ENCODE measurements at regions of chr22 and their contacts with region 1.

Region 1: DNA sequence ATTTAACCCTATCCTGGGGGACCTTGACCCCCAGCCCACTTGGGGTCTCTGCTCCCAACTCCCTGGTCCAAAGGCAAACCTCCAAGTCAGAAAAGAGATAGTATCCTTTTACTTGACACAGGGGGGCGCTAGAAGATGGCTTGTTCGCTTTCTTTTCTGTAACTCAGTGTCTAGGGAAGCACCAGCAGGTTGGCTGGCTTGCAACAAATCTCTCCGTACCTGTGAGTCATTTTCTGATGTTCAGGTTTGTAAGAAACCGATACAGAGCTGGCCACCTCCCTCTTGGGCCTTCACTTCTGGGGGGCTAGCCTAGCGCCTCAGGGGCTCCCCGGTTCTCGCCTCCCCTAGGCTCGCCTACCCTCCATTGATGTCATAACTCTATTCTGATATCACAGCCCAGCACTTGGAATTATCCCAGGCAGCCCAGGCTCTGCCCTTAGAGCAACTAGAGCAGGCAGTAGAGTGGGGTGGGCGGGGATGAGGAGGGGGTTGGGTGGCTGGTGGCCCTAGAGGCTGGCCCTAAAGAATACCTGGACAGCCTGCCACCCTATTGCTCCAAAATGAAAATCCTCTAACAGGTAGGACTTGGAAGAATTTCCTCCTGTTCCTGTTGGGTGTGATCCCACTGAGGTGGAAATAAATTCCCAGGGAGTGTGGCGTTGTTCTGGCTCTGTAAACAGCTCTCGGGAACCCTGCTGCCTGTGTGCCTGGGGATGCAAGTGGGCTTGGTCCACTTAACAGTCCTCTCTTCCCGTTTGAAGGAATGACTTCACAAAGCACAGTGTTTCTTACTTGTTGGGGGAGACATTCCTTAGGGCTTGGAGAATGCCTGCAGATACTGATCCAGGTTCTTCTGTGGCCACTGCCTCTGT is 69.4 kb downstream of the OSBP2 start:
- DNase-seq: peak; percentile 72
- H3K4me3 ChIP-seq: no peak overlapping the region; a peak in 1 of 4 replicates
- H3K27ac ChIP-seq: no peak overlapping the region
- H3K4me1 ChIP-seq: no peaks in the 10 kb centered on the region
- H3K27me3 ChIP-seq: no peaks in the 10 kb centered on the region
- CTCF ChIP-seq: peak; percentile 84
- EP300 ChIP-seq: no peak
- RAD21 ChIP-seq: peak; percentile 95

Region 2: DNA sequence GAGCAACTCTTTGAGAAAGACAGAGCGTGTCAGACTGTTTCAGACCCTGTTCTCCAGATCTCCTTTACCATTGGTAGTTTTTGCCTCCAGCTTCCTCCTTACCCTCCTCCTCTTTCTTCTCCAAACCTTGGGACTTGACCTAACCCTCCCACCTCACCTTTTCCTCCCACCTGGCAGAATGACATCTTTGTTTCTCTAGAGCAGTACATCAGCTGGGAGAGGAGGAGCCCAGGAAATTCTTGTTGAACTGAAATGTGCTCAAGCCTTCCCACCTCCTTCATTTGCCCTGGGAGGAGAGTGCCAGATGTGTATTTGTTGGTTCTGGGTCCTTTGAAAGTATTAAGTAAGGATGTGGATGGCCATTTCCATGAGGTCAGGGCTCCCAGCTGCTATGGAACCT is 52.0 kb before region 1 on chr22:
- CTCF ChIA-PET with region 1: no interaction called
- POLR2A ChIA-PET with region 1: no interaction called
- DNase-seq: no peak
- H3K4me3 ChIP-seq: no peak overlapping the region
- H3K27ac ChIP-seq: no peak overlapping the region
- H3K4me1 ChIP-seq: peaks cover 0 to 4% of the 10 kb centered on the region in 2 experiments; a peak in 1 of 4 replicates
- H3K27me3 ChIP-seq: no peaks in the 10 kb centered on the region
- CTCF ChIP-seq: no peak
- EP300 ChIP-seq: no peak
- RAD21 ChIP-seq: no peak

Region 3: DNA sequence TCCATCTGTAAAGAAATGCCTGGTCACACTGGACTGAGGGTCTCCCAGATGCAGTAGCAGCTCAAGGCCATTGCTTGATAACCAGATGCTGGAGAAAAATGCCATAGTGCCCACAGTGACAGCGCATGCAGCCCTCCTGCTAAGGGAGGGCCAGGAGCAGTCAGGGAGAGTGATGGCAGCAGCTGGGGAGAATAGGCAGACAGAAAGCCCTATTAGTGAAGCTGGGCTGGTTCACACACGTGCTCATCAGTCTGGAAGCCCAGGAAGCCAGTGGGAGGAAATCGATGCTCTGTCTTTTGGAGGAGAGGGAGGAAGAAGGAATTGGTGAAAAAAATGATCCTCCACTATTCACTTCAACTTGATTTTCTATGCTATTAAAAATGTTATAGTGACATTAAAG is 13.5 kb after region 1 on chr22:
- CTCF ChIA-PET with region 1: interaction called, 16 read pairs
- POLR2A ChIA-PET with region 1: no interaction called
- DNase-seq: peak; percentile 31
- H3K4me3 ChIP-seq: no peak overlapping the region
- H3K27ac ChIP-seq: no peak overlapping the region
- H3K4me1 ChIP-seq: no peaks in the 10 kb centered on the region; a peak in 2 of 4 replicates
- H3K27me3 ChIP-seq: no peaks in the 10 kb centered on the region
- CTCF ChIP-seq: no peak
- EP300 ChIP-seq: no peak
- RAD21 ChIP-seq: no peak

Region 4: GRCh38 chr22:30908051-30908461 is 144.0 kb after region 1 on chr22:
- CTCF ChIA-PET with region 1: interaction called, 10 read pairs
- POLR2A ChIA-PET with region 1: no interaction called
- DNase-seq: no peak
- H3K4me3 ChIP-seq: no peak overlapping the region
- H3K27ac ChIP-seq: no peak overlapping the region
- H3K4me1 ChIP-seq: no peaks in the 10 kb centered on the region
- H3K27me3 ChIP-seq: no peaks in the 10 kb centered on the region
- CTCF ChIP-seq: no peak
- EP300 ChIP-seq: no peak
- RAD21 ChIP-seq: no peak